HCT116 (cell line): ENCODE measurements at regions of chr1 and their contacts with region 1.

Region 1: GRCh38 chr1:94463765-94464330 is 45.7 kb downstream of the ABCD3 start:
- DNase-seq: peak; percentile 49
- ATAC-seq: peak; percentile 84
- H3K4me3 ChIP-seq: no peak overlapping the region
- H3K27ac ChIP-seq: no peak overlapping the region
- H3K4me1 ChIP-seq: no peaks in the 10 kb centered on the region
- H3K27me3 ChIP-seq: no peaks in the 10 kb centered on the region
- CTCF ChIP-seq: peak; percentile 55 to 79 (median 66); a peak in 5 of 6 replicates
- POLR2A ChIP-seq: no peak
- RAD21 ChIP-seq: peak; percentile 86

Region 2: DNA sequence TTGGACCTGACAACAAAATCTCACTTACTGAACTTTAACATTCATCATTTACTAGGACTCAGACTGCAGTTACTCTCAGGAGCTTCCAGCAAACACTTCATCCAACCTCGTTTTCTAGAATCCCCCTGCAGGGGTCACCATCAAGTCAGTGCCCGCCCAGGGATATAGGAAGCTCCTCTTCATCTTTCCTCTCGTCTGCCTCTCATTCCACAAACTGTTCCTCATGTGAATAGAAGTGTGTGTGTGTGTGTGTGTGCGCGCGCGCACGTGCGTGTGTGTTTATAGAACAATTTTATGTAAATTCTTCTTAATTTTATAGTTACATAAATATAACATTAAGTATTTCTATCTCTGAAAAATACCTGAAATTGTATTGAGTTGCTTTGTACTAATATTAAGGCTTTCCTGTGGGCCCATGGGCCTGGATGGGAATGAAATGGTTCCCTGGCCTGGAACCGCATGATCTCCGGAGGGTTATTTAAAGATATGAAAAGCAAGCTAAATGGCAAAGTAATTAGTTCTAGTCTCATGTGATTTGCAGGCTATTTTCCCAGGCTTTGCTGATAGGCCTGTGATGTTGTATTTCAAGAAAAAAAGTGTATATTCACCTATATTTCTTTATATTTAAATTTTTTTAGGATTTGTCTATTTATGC is 67.4 kb before region 1 on chr1:
- CTCF ChIA-PET with region 1: interaction called, 3 read pairs
- POLR2A ChIA-PET with region 1: no interaction called
- RAD21 ChIA-PET with region 1: no interaction called
- intact Hi-C with region 1: loop called (anchors 10 kb)
- DNase-seq: no peak
- ATAC-seq: no peak
- H3K4me3 ChIP-seq: no peak overlapping the region
- H3K27ac ChIP-seq: no peak overlapping the region
- H3K4me1 ChIP-seq: no peaks in the 10 kb centered on the region
- H3K27me3 ChIP-seq: no peaks in the 10 kb centered on the region
- CTCF ChIP-seq: 0 out of 6 replicates have a peak, but pooled peaks of 1 of the 3 experiments have one; percentile 6
- POLR2A ChIP-seq: no peak
- RAD21 ChIP-seq: 0 out of 2 replicates have a peak, but pooled peaks have one; percentile 12

Region 3: GRCh38 chr1:94481473-94481933 is 17.7 kb after region 1 on chr1:
- CTCF ChIA-PET with region 1: interaction called, 32 read pairs
- POLR2A ChIA-PET with region 1: no interaction called
- RAD21 ChIA-PET with region 1: no interaction called
- intact Hi-C with region 1: no loop called
- DNase-seq: peak; percentile 69
- ATAC-seq: peak; percentile 99
- H3K4me3 ChIP-seq: no peak overlapping the region
- H3K27ac ChIP-seq: no peak overlapping the region
- H3K4me1 ChIP-seq: peaks cover 0 to 8% of the 10 kb centered on the region in 2 experiments; a peak in 2 of 4 replicates
- H3K27me3 ChIP-seq: no peaks in the 10 kb centered on the region
- CTCF ChIP-seq: peak; percentile 69 to 91 (median 89)
- POLR2A ChIP-seq: no peak
- RAD21 ChIP-seq: peak; percentile 73